ENCODE measurements at regions of chr1 and their contacts with region 1.

Region 1: GRCh38 chr1:198258491-198258890 is 101.7 kb downstream of the NEK7 start:
- DNase-seq: no peak
- ATAC-seq: no peak
- H3K4me3 ChIP-seq: no peak overlapping the region
- H3K4me3 Mint-ChIP-seq: no peak overlapping the region
- H3K27ac ChIP-seq: no peak overlapping the region
- H3K27ac Mint-ChIP-seq: no peak overlapping the region
- H3K4me1 ChIP-seq: peaks cover 3% of the 10 kb centered on the region
- H3K4me1 Mint-ChIP-seq: peaks cover 54% of the 10 kb centered on the region
- H3K27me3 ChIP-seq: no peaks in the 10 kb centered on the region
- H3K27me3 Mint-ChIP-seq: no peaks in the 10 kb centered on the region
- CTCF ChIP-seq: no peak

Region 2: DNA sequence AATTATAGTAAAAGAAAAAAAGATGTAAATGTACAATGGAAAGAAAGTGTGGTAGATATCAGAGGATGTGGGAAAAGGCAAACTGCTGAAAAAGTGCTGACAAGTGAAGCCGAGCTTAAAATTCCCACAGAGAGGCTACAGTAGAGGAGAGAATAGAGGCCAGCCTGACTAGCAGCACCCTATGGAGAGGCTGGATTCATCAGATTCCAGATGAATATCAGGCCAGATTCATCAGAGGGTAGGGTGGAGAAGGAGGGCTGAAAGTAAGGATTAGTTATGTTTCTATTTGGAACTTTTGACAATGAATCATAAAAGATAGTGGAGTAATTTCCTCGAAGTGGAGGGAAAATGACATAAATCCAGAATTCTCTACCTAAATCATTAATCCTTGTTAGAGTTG is 162.1 kb before region 1 on chr1:
- CTCF ChIA-PET with region 1: no interaction called
- POLR2A ChIA-PET with region 1: no interaction called
- intact Hi-C with region 1: loop called in 1 of 2 experiments (anchors 5 kb)
- DNase-seq: no peak
- ATAC-seq: no peak
- H3K4me3 ChIP-seq: no peak overlapping the region
- H3K4me3 Mint-ChIP-seq: no peak overlapping the region
- H3K27ac ChIP-seq: no peak overlapping the region
- H3K27ac Mint-ChIP-seq: no peak overlapping the region
- H3K4me1 ChIP-seq: peaks cover under 1% of the 10 kb centered on the region
- H3K4me1 Mint-ChIP-seq: peaks cover 7% of the 10 kb centered on the region
- H3K27me3 ChIP-seq: no peaks in the 10 kb centered on the region
- H3K27me3 Mint-ChIP-seq: no peaks in the 10 kb centered on the region
- CTCF ChIP-seq: no peak